Sciatic nerve (tissue), 2 donors: ENCODE measurements at regions of chr2 and their contacts with region 1.

Region 1: GRCh38 chr2:7102826-7103225 is 185.6 kb downstream of the RNF144A start:
- DNase-seq: no peak
- ATAC-seq: no peak

Region 2: GRCh38 chr2:6283259-6283658 is 819.6 kb before region 1 on chr2:
- intact Hi-C with region 1: loop called (anchors 10 kb)
- DNase-seq: no peak
- ATAC-seq: no peak

Region 3: GRCh38 chr2:6667326-6667725 is 435.5 kb before region 1 on chr2:
- intact Hi-C with region 1: no loop called
- DNase-seq: no peak
- ATAC-seq: no peak

Region 4: GRCh38 chr2:8857709-8858108 is 1754.9 kb after region 1 on chr2:
- intact Hi-C with region 1: no loop called
- DNase-seq: no peak
- ATAC-seq: no peak